Vagina (tissue), 2 donors: ENCODE measurements at regions of chr2 and their contacts with region 1.

Region 1: DNA sequence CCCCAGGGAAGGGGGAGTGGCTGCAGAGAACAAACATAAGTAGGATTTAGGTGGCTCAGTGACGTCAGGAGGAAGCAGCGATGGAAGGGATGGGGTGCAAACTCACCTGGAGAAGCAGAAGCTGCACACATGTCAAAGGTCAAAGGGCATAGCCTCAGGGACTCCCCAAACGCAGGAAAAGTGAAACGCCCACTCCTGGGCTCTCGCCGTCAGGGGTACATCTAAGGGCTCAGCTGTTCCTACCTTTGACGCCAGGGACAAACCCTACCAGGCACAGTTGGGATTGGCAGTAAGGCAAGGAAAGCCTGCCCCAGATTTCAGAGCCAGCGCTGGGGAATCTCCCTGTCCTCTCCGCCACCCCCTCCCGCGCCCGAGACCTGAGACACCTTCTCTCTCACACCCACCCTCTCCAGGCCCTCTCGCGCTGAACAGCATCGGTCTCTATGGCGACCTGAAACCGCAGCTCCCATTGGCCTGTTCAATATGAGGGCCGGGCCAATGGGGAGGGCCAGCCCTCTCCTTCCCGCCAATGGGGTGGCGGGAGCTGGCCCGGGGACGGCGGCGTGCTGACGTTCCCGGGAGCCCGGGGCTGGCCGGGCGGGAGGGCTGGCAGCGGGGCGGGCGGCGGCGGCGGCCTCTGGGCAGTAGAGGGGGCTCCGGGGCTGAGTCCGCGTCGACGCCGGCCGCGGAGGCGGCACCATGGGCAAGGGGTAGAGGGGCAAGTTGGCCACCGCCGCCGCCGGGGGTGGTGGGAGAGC is at the starts of genes CCDC148 and PKP4:
- DNase-seq: peak in 1 of 2 donors; percentile 96
- H3K4me3 ChIP-seq: peak within 1 kb of the TSS; percentile 93 to 97
- H3K27ac ChIP-seq: peak within 1 kb of the TSS; percentile 97
- H3K4me1 ChIP-seq: peaks cover 33% of the 10 kb centered on the region
- H3K27me3 ChIP-seq: no peaks in the 10 kb centered on the region
- CTCF ChIP-seq: peak in 1 of 3 experiments; percentile 31
- POLR2A ChIP-seq: peak in 1 of 2 donors; percentile 85
- total RNA-seq, gene CCDC148: not detected
- total RNA-seq, gene PKP4: 71.5 TPM

Region 2: GRCh38 chr2:158403237-158403636 is 53.3 kb before region 1 on chr2:
- intact Hi-C with region 1: loop called (anchors 1 kb)
- DNase-seq: no peak
- H3K4me3 ChIP-seq: no peak overlapping the region
- H3K27ac ChIP-seq: no peak overlapping the region
- H3K4me1 ChIP-seq: peaks cover 9% of the 10 kb centered on the region
- H3K27me3 ChIP-seq: no peaks in the 10 kb centered on the region
- CTCF ChIP-seq: no peak
- POLR2A ChIP-seq: no peak

Region 3: DNA sequence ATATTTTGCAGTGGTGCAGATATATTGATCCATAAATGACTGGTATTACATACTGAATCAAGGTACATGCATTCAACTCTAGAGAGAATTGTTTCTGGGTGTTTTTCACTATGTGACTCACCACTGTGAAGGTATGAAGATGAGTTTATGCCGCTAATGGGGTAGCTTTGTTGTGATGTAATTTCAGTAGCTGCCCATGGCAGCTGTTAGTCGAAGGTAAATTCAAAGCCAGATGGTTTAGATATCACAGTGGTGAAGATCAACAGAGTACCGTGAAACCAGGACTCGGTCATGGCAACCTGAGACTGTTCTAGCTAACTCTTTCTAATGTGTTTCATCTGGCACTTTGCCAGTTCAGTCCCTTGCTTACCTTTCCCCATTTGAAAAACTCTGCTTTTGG is 50.7 kb after region 1 on chr2:
- intact Hi-C with region 1: no loop called
- DNase-seq: no peak
- H3K4me3 ChIP-seq: no peak overlapping the region
- H3K27ac ChIP-seq: no peak overlapping the region
- H3K4me1 ChIP-seq: peaks cover 30% of the 10 kb centered on the region
- H3K27me3 ChIP-seq: no peaks in the 10 kb centered on the region
- CTCF ChIP-seq: no peak
- POLR2A ChIP-seq: no peak

Region 4: DNA sequence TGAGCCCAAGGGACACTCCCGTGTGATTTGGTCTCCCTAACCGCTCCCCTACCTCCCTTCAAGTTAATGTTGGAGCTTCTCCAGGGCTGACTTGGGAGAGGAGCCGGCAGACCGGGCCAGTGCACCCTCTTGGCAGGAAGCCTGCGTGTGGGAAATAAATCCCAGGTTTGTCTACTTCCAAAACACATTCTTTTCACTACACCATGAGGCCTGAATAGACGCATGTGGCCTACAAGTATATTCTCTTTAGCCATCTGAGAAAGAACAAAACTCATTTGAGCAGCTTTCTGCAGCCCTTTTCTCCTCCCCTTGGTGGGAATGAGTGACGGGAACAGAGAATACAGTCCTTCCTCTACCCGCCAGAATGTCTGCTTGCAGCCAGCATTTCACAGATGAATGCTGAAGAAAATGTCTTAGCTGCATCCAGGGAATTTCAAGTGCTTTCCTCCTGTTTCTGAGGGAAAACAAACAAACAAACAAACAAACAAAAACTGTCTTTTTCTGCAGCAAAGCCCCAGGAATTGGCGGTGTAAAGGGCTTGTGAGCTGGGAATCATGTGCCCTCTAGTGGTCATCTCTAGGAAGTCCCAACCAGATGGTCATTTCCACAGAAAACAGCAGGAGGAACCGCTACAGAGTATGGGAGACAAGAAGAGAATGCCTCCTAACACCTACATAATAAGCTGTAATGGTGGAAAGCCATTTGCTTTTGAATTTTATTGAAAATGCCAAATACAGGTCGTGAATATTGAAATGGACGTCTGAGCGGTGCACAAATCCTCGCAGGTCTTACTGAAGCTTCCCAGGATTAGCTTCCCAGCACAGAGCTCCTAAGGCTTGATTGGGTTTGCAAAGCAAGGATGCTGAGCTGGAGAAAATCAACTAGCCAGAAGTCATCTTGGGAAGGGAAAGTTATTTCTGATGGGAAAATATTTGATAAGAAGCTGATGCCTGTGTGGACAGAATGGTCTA is 297.4 kb after region 1 on chr2:
- intact Hi-C with region 1: loop called (anchors 10 kb)
- DNase-seq: no peak
- H3K4me3 ChIP-seq: peak overlapping the region; percentile 16 to 21
- H3K27ac ChIP-seq: no peak overlapping the region
- H3K4me1 ChIP-seq: peaks cover 13% of the 10 kb centered on the region
- H3K27me3 ChIP-seq: no peaks in the 10 kb centered on the region
- CTCF ChIP-seq: peak; percentile 48 to 80 (median 66)
- POLR2A ChIP-seq: no peak